Dendritic cell treated with granulocyte-macrophage colony-stimulating factor and Interleukin-4, amounts not matched to agents 40 ng/mL and 50 ng/mL, for 4 days (primary cell): ENCODE measurements at regions of chr14 and their contacts with region 1.

Region 1: GRCh38 chr14:32576088-32576795 is 247.1 kb downstream of the AKAP6 start:
- H3K4me3 Mint-ChIP-seq: no peak overlapping the region
- H3K27ac Mint-ChIP-seq: no peak overlapping the region
- H3K4me1 Mint-ChIP-seq: no peaks in the 10 kb centered on the region
- H3K27me3 Mint-ChIP-seq: peaks cover 6% of the 10 kb centered on the region

Region 2: DNA sequence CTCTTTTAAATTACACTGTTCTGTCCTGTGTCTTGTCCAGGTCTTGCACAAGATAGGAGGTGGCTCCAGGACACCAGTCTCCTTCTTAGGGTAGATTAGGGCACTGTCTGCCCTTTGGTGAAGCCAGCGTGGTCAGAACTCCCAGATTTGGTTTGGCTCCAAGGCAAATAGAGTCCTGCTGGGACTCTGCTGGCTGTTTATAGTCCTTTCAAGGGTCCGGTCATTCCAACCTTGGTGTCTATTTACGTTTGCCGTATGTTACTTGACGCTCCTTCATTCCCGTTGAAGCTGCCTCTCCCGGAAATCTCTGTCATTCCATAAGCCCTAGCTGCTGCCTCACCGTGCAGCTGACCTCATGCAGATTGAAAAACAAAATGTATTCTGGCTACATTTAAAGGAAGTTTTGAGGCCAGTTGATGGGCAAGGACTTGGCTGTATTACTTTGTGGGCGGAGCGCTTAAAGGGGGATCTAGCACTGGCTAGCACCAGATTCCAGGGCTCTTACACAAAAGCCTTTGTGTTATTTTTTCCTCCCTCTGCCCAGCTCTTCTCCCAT is 66.5 kb before region 1 on chr14:
- intact Hi-C with region 1: no loop called
- H3K4me3 Mint-ChIP-seq: no peak overlapping the region
- H3K27ac Mint-ChIP-seq: no peak overlapping the region
- H3K4me1 Mint-ChIP-seq: no peaks in the 10 kb centered on the region
- H3K27me3 Mint-ChIP-seq: no peaks in the 10 kb centered on the region

Region 3: DNA sequence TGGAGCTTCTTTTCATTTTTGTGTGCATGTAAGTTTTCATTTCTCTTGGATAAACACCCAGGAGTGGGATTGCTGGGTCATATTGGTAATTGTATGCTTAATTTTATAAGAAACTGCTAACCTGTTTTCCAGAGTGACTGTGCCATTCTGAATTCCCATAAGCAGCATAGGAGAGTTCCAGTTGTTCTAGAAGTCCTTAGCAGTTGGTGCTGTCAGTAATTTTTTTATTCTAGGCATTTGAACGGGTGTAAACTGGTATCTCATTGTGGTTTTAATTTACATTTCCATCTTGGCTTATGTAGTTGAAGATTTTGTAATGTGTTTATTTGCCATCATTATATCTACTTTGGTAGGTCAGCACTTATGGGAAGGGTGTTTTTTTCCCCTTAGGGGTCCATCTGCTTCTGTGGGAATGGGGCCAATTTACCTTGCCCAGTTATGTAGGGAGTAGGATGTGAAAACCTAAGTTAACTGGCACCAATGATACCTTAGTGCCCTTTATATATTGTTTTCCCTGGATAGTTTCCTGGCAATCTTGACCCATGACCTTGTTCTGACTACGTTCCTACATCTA is 44.2 kb before region 1 on chr14:
- intact Hi-C with region 1: no loop called
- H3K4me3 Mint-ChIP-seq: no peak overlapping the region
- H3K27ac Mint-ChIP-seq: no peak overlapping the region
- H3K4me1 Mint-ChIP-seq: no peaks in the 10 kb centered on the region
- H3K27me3 Mint-ChIP-seq: no peaks in the 10 kb centered on the region

Region 4: DNA sequence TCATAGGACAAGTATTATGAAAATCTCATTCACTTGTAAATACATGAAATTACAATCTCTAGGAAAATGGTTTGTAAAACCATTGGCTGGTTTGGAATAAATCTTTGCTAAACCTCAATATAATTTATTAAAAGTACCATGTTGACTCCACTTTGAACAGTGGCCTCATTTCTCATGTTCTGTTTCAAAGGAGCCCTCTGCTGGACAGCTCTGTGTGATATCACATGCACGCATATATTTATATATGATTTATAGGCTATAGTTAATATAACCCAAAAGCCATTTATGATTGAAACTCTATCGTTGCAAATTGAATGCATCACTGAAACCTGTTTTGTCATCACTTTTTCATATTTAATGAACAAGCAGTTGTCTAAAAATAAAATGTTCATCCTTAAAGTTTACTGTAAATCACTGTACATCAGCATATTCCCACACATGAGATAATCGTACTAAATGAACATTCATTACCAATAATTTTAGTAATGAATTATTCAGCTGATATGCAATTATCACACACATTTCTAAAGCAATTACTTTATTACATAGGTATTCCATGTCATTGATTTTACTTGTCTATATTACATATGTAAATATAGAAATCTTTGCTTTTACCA is 856.3 kb after region 1 on chr14:
- intact Hi-C with region 1: loop called (anchors 5 kb)
- H3K4me3 Mint-ChIP-seq: no peak overlapping the region
- H3K27ac Mint-ChIP-seq: no peak overlapping the region
- H3K4me1 Mint-ChIP-seq: peaks cover 15% of the 10 kb centered on the region
- H3K27me3 Mint-ChIP-seq: peaks cover 3% of the 10 kb centered on the region

Region 5: DNA sequence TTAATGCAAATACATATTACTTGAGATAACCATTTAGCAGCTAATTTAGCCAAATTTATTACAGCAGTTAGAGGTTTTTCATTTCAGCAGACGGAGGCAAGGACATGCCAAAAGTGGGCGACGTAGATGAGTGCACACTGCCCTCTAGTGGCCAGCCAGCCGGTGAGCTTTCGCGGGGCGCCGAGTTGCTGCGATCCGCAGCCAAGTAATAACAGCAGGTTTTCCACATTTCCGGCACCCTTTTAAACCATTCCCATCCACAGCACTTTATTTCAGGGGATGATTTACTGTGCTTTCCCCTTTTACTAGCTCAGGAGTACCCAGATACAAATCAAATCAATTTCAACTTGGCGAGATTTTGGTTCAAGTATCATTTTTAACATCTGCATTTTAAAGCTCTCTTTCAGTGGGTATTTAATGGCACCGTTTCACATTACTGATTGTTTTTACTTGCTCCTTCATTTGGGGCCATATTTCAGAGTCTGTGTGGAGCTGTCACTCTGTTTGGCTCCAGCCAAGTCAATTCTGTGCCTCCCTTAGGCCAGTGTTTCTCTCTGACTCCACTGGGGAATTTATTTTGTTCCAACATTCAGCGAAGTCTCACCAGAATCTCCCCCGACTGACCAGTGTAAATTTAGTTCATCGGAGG is 1216.6 kb after region 1 on chr14:
- intact Hi-C with region 1: loop called (anchors 1 kb)
- H3K4me3 Mint-ChIP-seq: no peak overlapping the region
- H3K27ac Mint-ChIP-seq: no peak overlapping the region
- H3K4me1 Mint-ChIP-seq: peaks cover 7% of the 10 kb centered on the region
- H3K27me3 Mint-ChIP-seq: peaks cover 31% of the 10 kb centered on the region

Region 6: GRCh38 chr14:34237081-34237480 is 1660.8 kb after region 1 on chr14:
- intact Hi-C with region 1: loop called (anchors 10 kb)
- H3K4me3 Mint-ChIP-seq: no peak overlapping the region
- H3K27ac Mint-ChIP-seq: no peak overlapping the region
- H3K4me1 Mint-ChIP-seq: no peaks in the 10 kb centered on the region
- H3K27me3 Mint-ChIP-seq: peaks cover 5% of the 10 kb centered on the region

Region 7: GRCh38 chr14:34300882-34301734 is 1724.9 kb after region 1 on chr14:
- intact Hi-C with region 1: loop called (anchors 2 kb)
- H3K4me3 Mint-ChIP-seq: no peak overlapping the region
- H3K27ac Mint-ChIP-seq: no peak overlapping the region
- H3K4me1 Mint-ChIP-seq: no peaks in the 10 kb centered on the region
- H3K27me3 Mint-ChIP-seq: no peaks in the 10 kb centered on the region

Region 8: DNA sequence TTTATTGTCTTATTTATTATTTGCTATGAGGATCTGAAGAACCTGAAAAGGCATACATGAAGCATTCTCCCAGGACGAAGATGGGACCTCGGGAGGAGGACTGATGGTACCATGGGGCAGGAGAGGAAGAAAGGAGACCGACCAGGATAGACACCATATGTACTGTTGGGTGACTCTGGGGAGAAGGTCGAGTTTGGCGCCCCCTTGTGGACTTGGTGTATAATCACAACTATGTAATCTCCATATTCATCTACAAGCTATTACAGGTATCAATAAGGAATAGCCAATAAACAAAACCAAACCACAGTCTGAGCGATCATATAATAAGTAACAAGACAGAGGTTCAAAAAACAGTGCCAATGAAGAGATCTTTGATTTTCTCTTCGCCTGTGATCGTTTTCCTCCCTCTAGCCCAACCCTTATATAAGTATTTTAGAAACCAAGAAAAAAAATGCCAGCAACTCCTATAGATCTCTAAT is 1746.7 kb after region 1 on chr14:
- intact Hi-C with region 1: loop called (anchors 5 kb)
- H3K4me3 Mint-ChIP-seq: no peak overlapping the region
- H3K27ac Mint-ChIP-seq: no peak overlapping the region
- H3K4me1 Mint-ChIP-seq: no peaks in the 10 kb centered on the region
- H3K27me3 Mint-ChIP-seq: peaks cover 4% of the 10 kb centered on the region